ENCODE measurements at regions of chr6 and their contacts with region 1.

Region 1: GRCh38 chr6:21022343-21023107 is 488.3 kb downstream of the CDKAL1 start:
- DNase-seq: peak; percentile 87
- ATAC-seq: peak; percentile 97
- H3K4me3 ChIP-seq: no peak overlapping the region
- H3K27ac ChIP-seq: peak overlapping the region; percentile 59
- H3K4me1 ChIP-seq: peaks cover 37% of the 10 kb centered on the region
- H3K27me3 ChIP-seq: no peaks in the 10 kb centered on the region
- CTCF ChIP-seq: no peak
- EP300 ChIP-seq: peak in 1 of 2 experiments; percentile 32; a peak in 2 of 4 replicates
- POLR2A ChIP-seq: no peak
- RAD21 ChIP-seq: no peak

Region 2: DNA sequence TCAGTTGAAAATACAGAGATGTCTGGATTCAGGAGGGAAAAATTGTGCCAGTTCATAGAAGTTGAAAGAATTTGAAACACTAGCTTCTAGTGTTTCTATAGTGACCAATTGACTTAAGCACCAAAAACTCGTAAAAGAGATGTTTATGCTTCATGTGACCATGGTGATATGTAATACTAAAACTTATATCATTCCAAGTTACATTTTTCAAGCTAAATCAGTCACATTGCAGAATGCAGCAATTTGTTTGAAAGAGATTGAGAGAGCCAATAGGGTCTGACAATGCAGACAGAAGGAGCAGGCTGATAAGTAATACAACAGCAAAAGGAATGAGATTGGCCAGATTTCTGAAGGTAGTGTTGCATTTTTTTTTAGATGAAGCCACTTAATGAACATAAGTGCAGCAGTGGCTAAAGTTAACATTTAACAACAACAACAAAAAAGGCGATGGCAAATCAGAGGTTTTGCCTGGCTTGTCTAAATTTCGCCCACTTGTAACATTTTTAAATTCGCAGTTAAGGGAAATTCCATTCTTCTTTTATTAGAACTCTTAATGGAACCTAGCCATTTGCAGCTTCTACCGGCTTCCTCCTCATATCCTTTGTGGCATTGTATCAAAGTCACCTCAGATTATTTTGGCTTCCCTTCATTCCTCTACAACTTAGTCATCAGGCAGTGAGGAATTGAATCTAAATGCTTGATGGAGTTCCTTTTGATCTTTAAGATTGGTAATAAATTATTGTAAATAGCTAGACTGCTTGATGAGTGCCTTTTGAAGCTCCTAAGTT is 87.1 kb after region 1 on chr6:
- CTCF ChIA-PET with region 1: no interaction called
- POLR2A ChIA-PET with region 1: no interaction called
- in situ Hi-C with region 1: no loop called
- intact Hi-C with region 1: no loop called
- DNase-seq: peak; percentile 33
- ATAC-seq: no peak
- H3K4me3 ChIP-seq: no peak overlapping the region
- H3K27ac ChIP-seq: no peak overlapping the region
- H3K4me1 ChIP-seq: peaks cover 32% of the 10 kb centered on the region
- H3K27me3 ChIP-seq: no peaks in the 10 kb centered on the region
- CTCF ChIP-seq: no peak
- EP300 ChIP-seq: no peak
- POLR2A ChIP-seq: no peak
- RAD21 ChIP-seq: no peak

Region 3: GRCh38 chr6:21138336-21139069 is 116.0 kb after region 1 on chr6:
- CTCF ChIA-PET with region 1: no interaction called
- POLR2A ChIA-PET with region 1: no interaction called
- in situ Hi-C with region 1: no loop called
- intact Hi-C with region 1: no loop called
- DNase-seq: no peak
- ATAC-seq: no peak; the same call in 2 of the 3 replicates
- H3K4me3 ChIP-seq: no peak overlapping the region
- H3K27ac ChIP-seq: no peak overlapping the region
- H3K4me1 ChIP-seq: peaks cover 29% of the 10 kb centered on the region
- H3K27me3 ChIP-seq: no peaks in the 10 kb centered on the region
- CTCF ChIP-seq: no peak
- EP300 ChIP-seq: no peak
- POLR2A ChIP-seq: no peak
- RAD21 ChIP-seq: no peak

Region 4: GRCh38 chr6:21679761-21680265 is 657.3 kb after region 1 on chr6:
- CTCF ChIA-PET with region 1: no interaction called
- POLR2A ChIA-PET with region 1: no interaction called
- in situ Hi-C with region 1: no loop called
- intact Hi-C with region 1: loop called (anchors 5 kb)
- DNase-seq: no peak
- ATAC-seq: no peak
- H3K4me3 ChIP-seq: no peak overlapping the region
- H3K27ac ChIP-seq: no peak overlapping the region
- H3K4me1 ChIP-seq: no peaks in the 10 kb centered on the region
- H3K27me3 ChIP-seq: no peaks in the 10 kb centered on the region
- CTCF ChIP-seq: no peak
- EP300 ChIP-seq: no peak
- POLR2A ChIP-seq: no peak
- RAD21 ChIP-seq: no peak

Measured in HepG2 (cell line).